ENCODE measurements at regions of chr11 and their contacts with region 1.

Region 1: DNA sequence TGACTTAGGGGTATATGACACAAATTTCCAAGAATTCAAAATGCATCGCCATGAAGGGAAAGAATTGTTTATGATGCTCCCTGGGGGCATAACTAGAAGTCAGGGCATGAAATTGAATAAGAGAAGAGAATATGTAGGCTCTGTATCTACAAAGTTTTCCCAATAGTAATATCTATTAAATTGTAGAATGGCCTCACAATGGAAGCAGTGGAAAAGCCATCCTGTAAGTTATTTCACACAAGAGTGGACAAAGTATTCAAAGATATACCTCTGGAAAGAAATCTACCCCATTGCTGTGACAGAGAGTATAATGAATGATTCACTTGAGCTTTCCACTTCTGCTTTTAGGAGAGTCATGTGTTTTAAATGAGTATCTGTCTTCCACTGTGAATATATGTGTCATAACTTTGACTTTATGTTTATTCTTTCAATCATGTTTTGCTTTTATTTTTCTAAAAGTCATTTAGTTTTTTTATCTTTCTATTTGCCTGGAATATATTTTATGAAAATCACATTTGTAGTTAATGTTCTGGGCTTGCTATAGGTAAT is 65.7 kb upstream of the DDI1 start:
- DNase-seq: no peak
- H3K4me3 ChIP-seq: no peak overlapping the region
- H3K27ac ChIP-seq: no peak overlapping the region
- H3K27me3 ChIP-seq: no peaks in the 10 kb centered on the region
- CTCF ChIP-seq: no peak

Region 2: DNA sequence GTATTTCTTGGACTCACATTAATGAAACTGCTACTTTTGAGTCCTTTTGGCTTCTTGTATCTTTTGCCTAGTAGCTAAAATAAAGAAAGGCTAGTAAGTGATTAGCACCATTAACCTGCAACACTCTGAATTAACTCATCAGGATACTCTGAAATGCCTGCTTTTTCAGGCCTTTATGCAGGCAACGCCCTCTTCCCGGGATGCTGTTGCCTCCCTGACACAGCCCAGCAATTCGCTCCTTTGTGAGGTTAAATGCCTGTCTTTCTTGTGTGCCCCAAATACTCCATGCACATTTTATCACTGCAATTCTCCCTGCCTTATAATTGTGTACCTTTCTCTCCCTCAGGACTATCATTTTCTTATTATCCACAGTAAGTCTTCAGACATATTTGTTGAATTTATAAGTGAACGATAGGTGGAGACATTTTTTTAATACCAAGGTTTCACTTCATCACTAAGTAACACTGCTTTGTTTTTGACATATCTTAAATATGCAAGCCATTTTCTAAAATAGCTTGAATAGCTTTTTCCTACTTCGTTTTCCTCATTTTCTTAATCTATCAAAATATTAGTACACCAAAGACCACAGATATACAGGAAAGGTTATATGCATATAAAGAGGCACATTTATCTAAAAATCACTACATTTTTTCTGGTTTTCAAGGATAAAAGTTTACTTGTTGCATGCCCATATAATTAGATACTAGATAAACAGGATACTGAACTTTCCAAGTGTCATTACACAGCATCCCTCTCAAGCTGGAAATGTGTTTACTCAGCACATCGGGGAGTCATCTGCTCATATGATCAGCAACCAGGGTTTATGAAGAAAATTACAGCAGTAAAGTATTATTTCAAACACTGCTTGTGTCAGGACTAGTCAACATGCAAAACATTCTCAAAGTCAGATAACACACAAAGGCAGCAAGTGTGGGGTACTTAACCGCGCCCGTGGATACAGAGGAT is 17.1 kb after region 1 on chr11:
- CTCF ChIA-PET with region 1: interaction called, 11 read pairs
- POLR2A ChIA-PET with region 1: no interaction called
- DNase-seq: no peak
- H3K4me3 ChIP-seq: no peak overlapping the region
- H3K27ac ChIP-seq: peak overlapping the region; percentile 57
- H3K27me3 ChIP-seq: no peaks in the 10 kb centered on the region
- CTCF ChIP-seq: no peak